PC-9 (cell line): ENCODE measurements at regions of chr6 and their contacts with region 1.

Region 1: GRCh38 chr6:17656092-17656491 is 50.6 kb downstream of the NUP153 start:
- DNase-seq: no peak
- H3K4me3 ChIP-seq: no peak overlapping the region
- H3K27ac ChIP-seq: no peak overlapping the region
- H3K4me1 ChIP-seq: peaks cover 1% of the 10 kb centered on the region; the same call in 1 of the 2 replicates
- H3K27me3 ChIP-seq: no peaks in the 10 kb centered on the region
- CTCF ChIP-seq: no peak

Region 2: DNA sequence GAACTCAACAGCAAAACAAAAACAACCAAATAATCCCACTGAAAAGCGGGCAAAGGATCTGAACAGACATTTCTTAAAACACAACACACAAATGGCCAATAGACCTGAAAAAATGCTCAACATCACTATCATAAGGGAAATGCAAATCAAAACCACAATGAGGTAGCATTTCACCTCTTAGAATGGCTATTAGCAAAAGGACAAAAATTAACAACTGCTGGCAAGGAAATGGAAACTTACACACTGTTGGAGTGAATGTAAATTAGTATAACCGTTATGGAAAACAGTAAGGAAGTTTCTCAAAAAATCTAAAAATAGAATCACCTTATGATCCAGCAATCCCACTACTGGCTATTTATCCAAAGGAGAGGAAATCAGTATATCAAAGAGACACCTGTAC is 35.1 kb before region 1 on chr6:
- CTCF ChIA-PET with region 1: no interaction called
- POLR2A ChIA-PET with region 1: no interaction called
- intact Hi-C with region 1: loop called (anchors 5 kb)
- DNase-seq: no peak
- H3K4me3 ChIP-seq: no peak overlapping the region
- H3K27ac ChIP-seq: no peak overlapping the region
- H3K4me1 ChIP-seq: no peaks in the 10 kb centered on the region
- H3K27me3 ChIP-seq: no peaks in the 10 kb centered on the region
- CTCF ChIP-seq: no peak

Region 3: DNA sequence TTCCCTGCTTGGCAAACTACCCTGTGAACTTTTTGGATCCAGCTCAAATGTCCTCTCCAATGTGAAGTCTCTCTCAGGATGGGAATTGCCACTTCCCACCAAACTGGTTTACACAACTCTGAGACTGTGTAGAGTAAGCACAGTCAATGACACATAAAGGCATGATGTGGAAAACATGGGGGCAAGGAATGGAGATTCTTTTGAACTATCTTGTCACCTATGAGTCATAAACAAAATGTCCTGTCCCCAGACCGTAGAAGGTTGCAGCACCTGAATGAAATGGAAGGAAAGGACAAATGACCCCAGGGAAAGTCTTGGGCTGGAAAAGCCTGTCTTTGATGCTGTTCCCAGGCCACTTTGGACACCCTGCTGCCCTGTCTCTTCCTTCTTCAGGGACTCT is 342.4 kb after region 1 on chr6:
- CTCF ChIA-PET with region 1: no interaction called
- POLR2A ChIA-PET with region 1: no interaction called
- intact Hi-C with region 1: no loop called
- DNase-seq: peak; percentile 12 to 59
- H3K4me3 ChIP-seq: no peak overlapping the region
- H3K27ac ChIP-seq: no peak overlapping the region
- H3K4me1 ChIP-seq: peaks cover 24% of the 10 kb centered on the region
- H3K27me3 ChIP-seq: no peaks in the 10 kb centered on the region
- CTCF ChIP-seq: no peak